ENCODE measurements at regions of chr10 and their contacts with region 1.

Region 1: GRCh38 chr10:122461367-122461728 is at the start of gene HTRA1:
- DNase-seq: peak; percentile 83 to 86
- ATAC-seq: peak; percentile 73 to 89 (median 82)
- H3K4me3 ChIP-seq: peak within 1 kb of the TSS; percentile 47 to 87 (median 78)
- H3K27ac ChIP-seq: peak within 1 kb of the TSS; percentile 51 to 89 (median 77)
- H3K4me1 ChIP-seq: peaks cover 13 to 59% (median 38%) of the 10 kb centered on the region in 9 donors
- H3K27me3 ChIP-seq: peaks cover 0 to 73% (median 0%) of the 10 kb centered on the region in 7 donors
- CTCF ChIP-seq: no peak
- total RNA-seq, gene HTRA1: 23.4 to 108 (median 73.1) TPM

Region 2: GRCh38 chr10:122368502-122369256 is 92.7 kb before region 1 on chr10:
- intact Hi-C with region 1: no loop called
- DNase-seq: peak in 1 of 2 donors; percentile 26
- ATAC-seq: peak in 4 of 8 donors; percentile 29 to 56 (median 45)
- H3K4me3 ChIP-seq: peak overlapping the region in 5 of 10 donors; percentile 7 to 32 (median 25)
- H3K27ac ChIP-seq: peak overlapping the region in 6 of 10 donors; percentile 0 to 68 (median 40)
- H3K4me1 ChIP-seq: peaks cover 0 to 58% (median 24%) of the 10 kb centered on the region in 9 donors
- H3K27me3 ChIP-seq: peaks cover 0 to 11% (median 0%) of the 10 kb centered on the region in 7 donors
- CTCF ChIP-seq: no peak

Region 3: DNA sequence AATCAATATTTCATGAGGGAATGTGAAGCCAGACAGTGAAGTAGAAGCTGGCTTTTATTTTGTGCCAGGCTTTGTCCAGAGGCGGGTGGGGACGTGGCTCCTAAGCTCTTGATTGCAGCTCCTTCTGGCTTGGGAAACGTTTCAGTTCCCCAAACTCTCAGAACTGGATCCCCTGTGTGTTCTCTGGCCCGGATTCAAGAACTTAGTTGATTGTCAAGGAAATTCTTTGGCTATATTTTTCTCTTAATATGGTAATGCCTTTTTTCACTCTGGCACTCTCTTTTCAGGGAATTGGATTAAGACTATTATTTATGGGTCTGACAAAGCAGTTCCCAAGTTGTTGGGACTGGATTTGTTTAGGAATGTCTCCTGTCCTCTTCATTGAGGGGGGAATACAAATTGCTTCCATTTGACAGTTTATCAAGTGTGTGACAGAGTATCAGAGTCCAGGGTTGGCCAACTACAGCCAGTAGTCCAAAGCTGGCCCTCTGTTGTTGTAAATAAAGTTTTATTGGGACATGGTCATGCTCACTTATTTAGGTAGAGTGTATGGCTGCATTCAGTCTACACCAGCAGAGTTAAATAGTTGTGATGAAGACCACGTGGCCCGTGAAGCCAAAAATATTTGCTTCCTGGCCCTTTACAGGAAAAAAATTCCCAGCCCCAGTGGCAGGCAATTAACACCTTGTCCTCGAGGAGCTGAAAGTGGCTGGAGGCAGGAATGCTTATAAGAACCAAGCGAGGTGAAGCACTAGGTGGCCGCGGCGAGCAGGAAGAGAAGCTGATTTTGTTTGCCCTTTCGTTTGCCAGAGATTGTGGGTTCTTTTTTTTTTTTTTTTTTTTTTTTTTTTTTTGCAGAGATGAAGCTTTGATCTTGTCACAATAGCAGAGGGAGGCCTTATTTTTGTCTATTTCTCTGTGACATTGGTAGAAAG is 34.3 kb after region 1 on chr10:
- intact Hi-C with region 1: loop called in 4 of 10 experiments (anchors 5 kb)
- DNase-seq: peak in 1 of 2 donors; percentile 63
- ATAC-seq: peak in 3 of 8 donors; percentile 19 to 32 (median 25)
- H3K4me3 ChIP-seq: no peak overlapping the region
- H3K27ac ChIP-seq: peak overlapping the region in 8 of 10 donors; percentile 17 to 59 (median 42)
- H3K4me1 ChIP-seq: peaks cover 6 to 78% (median 53%) of the 10 kb centered on the region in 9 donors
- H3K27me3 ChIP-seq: no peaks in the 10 kb centered on the region
- CTCF ChIP-seq: no peak

Region 4: GRCh38 chr10:122504610-122504950 is 43.2 kb after region 1 on chr10:
- intact Hi-C with region 1: loop called in 4 of 10 experiments (anchors 5 kb)
- DNase-seq: peak; percentile 89 to 91
- ATAC-seq: peak; percentile 95 to 98 (median 98)
- H3K4me3 ChIP-seq: no peak overlapping the region
- H3K27ac ChIP-seq: peak overlapping the region in 6 of 10 donors; percentile 15 to 62 (median 40)
- H3K4me1 ChIP-seq: peaks cover 5 to 43% (median 23%) of the 10 kb centered on the region in 9 donors
- H3K27me3 ChIP-seq: no peaks in the 10 kb centered on the region
- CTCF ChIP-seq: no peak

Measured in heart right ventricle (tissue), 16 donors.